ENCODE measurements at regions of chr10 and their contacts with region 1.

Region 1: DNA sequence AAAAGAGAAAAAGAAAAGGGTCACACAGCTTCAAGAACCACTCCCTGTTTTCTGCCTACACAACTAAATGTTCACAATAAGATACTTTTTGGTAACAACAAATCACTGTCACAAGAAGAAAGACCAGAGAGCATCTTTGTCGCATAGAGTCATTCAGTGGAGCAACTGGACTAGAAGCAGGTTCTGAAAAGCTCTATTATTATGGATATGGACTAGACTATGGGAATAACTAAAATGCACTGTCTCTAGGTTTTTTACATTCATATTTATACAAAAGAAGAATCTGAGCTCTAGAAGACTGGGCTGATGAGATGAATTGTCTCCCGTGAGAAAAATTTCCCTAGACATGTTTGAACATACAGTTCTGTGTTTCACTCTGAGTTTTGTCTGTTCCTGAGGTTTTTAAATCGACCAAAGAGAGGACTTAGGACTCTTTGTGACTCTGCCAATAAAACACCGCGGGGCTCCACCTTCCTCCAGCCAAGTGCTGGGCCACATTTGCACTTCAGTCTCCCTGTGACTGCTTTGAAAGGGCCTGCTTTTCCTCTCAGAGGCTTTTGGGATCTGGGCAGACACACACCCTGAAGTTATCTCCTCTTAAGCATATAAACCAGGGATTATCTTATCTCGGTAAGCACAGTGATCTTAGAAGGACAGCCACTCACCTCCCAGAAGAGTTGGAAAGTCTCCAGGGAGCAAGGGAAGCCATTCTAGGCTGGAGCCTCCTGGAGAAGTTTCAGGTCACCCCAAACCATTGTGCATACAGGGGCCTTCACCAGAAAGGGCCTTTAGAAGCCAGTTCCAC is 101.0 kb upstream of the JCAD start:
- DNase-seq: no peak
- ATAC-seq: no peak
- H3K4me3 ChIP-seq: no peak overlapping the region
- H3K27ac ChIP-seq: peak overlapping the region in 1 of 12 donors; percentile 31
- H3K4me1 ChIP-seq: peaks cover 0 to 5% (median 0%) of the 10 kb centered on the region in 12 donors
- H3K27me3 ChIP-seq: no peaks in the 10 kb centered on the region
- CTCF ChIP-seq: no peak
- POLR2A ChIP-seq: no peak

Region 2: DNA sequence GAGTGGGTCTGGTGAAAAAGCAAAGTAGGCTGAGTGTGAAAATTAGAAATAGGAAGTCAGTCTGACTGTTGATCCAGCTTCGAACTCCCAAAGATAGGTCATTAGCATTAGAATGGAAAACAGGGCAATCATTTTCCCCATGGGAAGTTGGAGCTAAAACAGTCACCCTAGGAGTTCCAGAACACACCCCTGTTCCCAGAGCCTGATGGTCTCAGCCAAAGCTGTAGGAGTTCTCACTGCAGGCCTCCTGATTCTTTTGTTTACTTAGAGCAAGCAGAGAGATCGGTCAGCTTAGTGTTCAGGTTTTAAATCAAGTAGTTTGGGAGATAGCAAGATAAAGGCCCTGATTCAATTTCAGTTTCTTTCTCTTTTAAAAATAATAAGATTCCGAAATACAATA is 72.2 kb before region 1 on chr10:
- intact Hi-C with region 1: loop called in 1 of 10 experiments (anchors 10 kb)
- DNase-seq: no peak
- ATAC-seq: no peak
- H3K4me3 ChIP-seq: no peak overlapping the region
- H3K27ac ChIP-seq: peak overlapping the region in 1 of 12 donors; percentile 20
- H3K4me1 ChIP-seq: peaks cover 0 to 5% (median 0%) of the 10 kb centered on the region in 12 donors
- H3K27me3 ChIP-seq: no peaks in the 10 kb centered on the region
- CTCF ChIP-seq: no peak
- POLR2A ChIP-seq: no peak

Region 3: DNA sequence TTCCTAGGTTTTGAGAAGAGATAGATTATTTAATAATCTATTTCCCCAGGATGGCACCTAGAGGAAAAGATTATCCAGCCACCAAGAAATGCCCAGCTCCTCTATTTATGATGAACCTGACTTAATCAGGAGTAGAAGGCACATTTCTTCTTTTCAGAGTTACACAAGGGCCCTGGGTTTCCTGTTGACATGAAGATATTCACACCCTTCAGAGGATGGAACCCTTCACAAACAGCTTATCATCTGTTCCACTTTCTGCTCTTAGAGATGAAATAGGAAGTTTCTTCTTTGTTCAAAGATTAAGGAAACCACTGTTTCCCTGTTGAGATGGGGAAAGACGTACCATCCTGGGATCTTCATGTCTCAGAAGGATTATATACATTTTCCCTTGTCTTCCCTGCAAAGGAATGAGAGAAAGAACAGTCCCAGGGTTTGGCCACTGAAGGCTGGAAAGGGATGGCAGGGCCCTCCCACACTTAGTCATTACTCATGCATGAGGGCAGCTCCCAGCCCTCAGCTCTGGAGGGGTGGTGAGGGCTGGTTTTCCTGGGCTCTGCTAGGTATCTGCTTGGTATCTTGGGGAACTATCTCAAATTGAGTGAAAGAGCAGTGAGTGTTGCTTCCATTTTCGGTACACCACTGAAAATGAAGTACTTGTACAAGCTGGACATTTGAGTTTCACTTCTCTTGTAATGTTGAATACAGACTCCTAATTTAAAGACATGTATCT is 124.7 kb after region 1 on chr10:
- intact Hi-C with region 1: no loop called
- DNase-seq: no peak
- ATAC-seq: no peak
- H3K4me3 ChIP-seq: peak overlapping the region in 1 of 12 donors; percentile 6
- H3K27ac ChIP-seq: peak overlapping the region in 1 of 12 donors; percentile 51
- H3K4me1 ChIP-seq: peaks cover 0 to 18% (median 0%) of the 10 kb centered on the region in 12 donors
- H3K27me3 ChIP-seq: no peaks in the 10 kb centered on the region
- CTCF ChIP-seq: no peak
- POLR2A ChIP-seq: no peak

Region 4: GRCh38 chr10:30330497-30331168 is 170.3 kb after region 1 on chr10:
- intact Hi-C with region 1: no loop called
- DNase-seq: no peak
- ATAC-seq: no peak
- H3K4me3 ChIP-seq: no peak overlapping the region
- H3K27ac ChIP-seq: no peak overlapping the region
- H3K4me1 ChIP-seq: no peaks in the 10 kb centered on the region
- H3K27me3 ChIP-seq: no peaks in the 10 kb centered on the region
- CTCF ChIP-seq: no peak
- POLR2A ChIP-seq: no peak

Region 5: GRCh38 chr10:30529373-30529998 is 369.1 kb after region 1 on chr10:
- intact Hi-C with region 1: no loop called
- DNase-seq: peak; percentile 52 to 85 (median 77)
- ATAC-seq: peak; percentile 45 to 91 (median 79)
- H3K4me3 ChIP-seq: peak overlapping the region in 3 of 12 donors; percentile 3 to 37 (median 6)
- H3K27ac ChIP-seq: peak overlapping the region in 5 of 12 donors; percentile 13 to 91 (median 46)
- H3K4me1 ChIP-seq: peaks cover 0 to 87% (median 0%) of the 10 kb centered on the region in 12 donors
- H3K27me3 ChIP-seq: no peaks in the 10 kb centered on the region
- CTCF ChIP-seq: no peak
- POLR2A ChIP-seq: no peak